ENCODE measurements at regions of chr6 and their contacts with region 1.

Region 1: DNA sequence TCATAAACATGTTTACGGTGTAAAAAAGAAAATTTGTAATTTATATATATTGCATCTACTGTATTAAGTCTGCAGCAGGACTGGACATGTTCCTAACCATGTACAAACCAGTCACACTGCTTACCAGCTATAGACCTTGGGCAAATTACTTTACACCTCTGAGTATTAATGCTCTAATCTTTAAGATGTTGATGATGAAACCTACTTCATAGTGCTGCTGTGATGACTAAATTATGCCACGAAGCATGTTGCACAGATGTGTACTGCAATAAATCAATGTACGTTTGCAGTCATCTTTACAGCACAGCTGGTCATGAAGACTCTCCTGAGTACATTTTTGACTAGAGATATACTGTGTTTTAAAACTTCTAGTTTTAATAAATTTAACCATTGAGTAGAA is 42.6 kb downstream of the PRKN start:
- DNase-seq: no peak
- H3K4me3 ChIP-seq: no peak overlapping the region
- H3K27ac ChIP-seq: no peak overlapping the region
- H3K4me1 ChIP-seq: no peaks in the 10 kb centered on the region
- H3K27me3 ChIP-seq: no peaks in the 10 kb centered on the region
- CTCF ChIP-seq: no peak

Region 2: DNA sequence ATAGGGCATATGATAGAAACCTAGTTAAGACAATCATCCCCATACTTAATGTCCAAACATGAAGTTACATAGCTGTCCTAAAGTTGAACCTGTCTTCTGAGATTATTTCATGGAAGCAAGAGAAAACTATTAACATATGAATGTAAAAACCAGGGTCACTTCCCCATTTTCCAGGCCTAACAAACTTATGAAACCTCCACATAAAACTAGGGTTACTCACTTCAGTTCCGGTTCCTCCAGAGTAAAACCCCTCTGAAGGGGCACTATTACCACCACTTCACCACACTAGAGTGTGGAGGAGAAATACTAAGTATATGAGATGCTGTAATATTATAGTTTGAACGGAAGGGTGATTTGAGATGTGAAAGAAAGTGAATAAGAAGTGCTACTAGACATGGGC is 27.7 kb after region 1 on chr6:
- CTCF ChIA-PET with region 1: no interaction called
- dilution Hi-C with region 1: no loop called
- in situ Hi-C with region 1: no loop called
- intact Hi-C with region 1: loop called (anchors 1 kb)
- DNase-seq: no peak
- H3K4me3 ChIP-seq: no peak overlapping the region
- H3K27ac ChIP-seq: no peak overlapping the region
- H3K4me1 ChIP-seq: no peaks in the 10 kb centered on the region
- H3K27me3 ChIP-seq: no peaks in the 10 kb centered on the region
- CTCF ChIP-seq: no peak